ENCODE measurements at regions of chr5 and their contacts with region 1.

Region 1: GRCh38 chr5:6435356-6435755 is 13.3 kb upstream of the UBE2QL1 start:
- DNase-seq: peak; percentile 56
- H3K4me3 ChIP-seq: no peak overlapping the region
- H3K27ac ChIP-seq: no peak overlapping the region
- H3K4me1 ChIP-seq: no peaks in the 10 kb centered on the region
- H3K27me3 ChIP-seq: peaks cover 11 to 12% of the 10 kb centered on the region in 2 experiments
- CTCF ChIP-seq: peak; percentile 64 to 82
- POLR2A ChIP-seq: no peak

Region 2: GRCh38 chr5:5492087-5492933 is 943.0 kb before region 1 on chr5:
- CTCF ChIA-PET with region 1: interaction called, 14 read pairs
- POLR2A ChIA-PET with region 1: no interaction called
- dilution Hi-C with region 1: no loop called
- intact Hi-C with region 1: loop called (anchors 5 kb)
- DNase-seq: peak; percentile 49
- H3K4me3 ChIP-seq: no peak overlapping the region
- H3K27ac ChIP-seq: no peak overlapping the region
- H3K4me1 ChIP-seq: peaks cover 3% of the 10 kb centered on the region
- H3K27me3 ChIP-seq: peaks cover 0 to 7% of the 10 kb centered on the region in 2 experiments
- CTCF ChIP-seq: peak; percentile 62
- POLR2A ChIP-seq: no peak

Region 3: DNA sequence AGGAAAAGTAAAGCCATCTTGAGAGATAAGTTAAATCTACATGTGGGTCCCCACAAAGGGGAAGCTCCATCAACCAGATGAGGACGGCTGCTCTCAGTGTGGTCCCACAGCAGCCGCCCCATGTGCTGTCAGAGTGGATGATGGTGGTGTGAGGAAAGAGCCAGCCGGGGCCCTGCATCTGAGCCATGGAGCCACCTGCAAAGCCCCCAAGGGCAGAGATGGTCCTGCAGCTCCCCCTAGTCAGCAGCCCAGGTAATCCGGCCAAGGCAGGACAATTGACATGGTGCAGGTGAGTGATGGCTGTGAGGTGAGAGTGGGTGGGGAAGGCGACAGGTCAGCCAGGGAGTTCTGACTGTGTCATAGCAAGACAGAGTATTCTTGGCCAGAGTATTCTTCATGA is 554.1 kb before region 1 on chr5:
- CTCF ChIA-PET with region 1: no interaction called
- POLR2A ChIA-PET with region 1: no interaction called
- dilution Hi-C with region 1: no loop called
- intact Hi-C with region 1: no loop called
- DNase-seq: no peak
- H3K4me3 ChIP-seq: no peak overlapping the region
- H3K27ac ChIP-seq: no peak overlapping the region
- H3K4me1 ChIP-seq: no peaks in the 10 kb centered on the region
- H3K27me3 ChIP-seq: no peaks in the 10 kb centered on the region
- CTCF ChIP-seq: no peak
- POLR2A ChIP-seq: no peak

Region 4: GRCh38 chr5:6305853-6306252 is 129.5 kb before region 1 on chr5:
- CTCF ChIA-PET with region 1: interaction called, 10 read pairs
- POLR2A ChIA-PET with region 1: no interaction called
- dilution Hi-C with region 1: no loop called
- intact Hi-C with region 1: no loop called
- DNase-seq: no peak
- H3K4me3 ChIP-seq: no peak overlapping the region
- H3K27ac ChIP-seq: no peak overlapping the region
- H3K4me1 ChIP-seq: no peaks in the 10 kb centered on the region
- H3K27me3 ChIP-seq: no peaks in the 10 kb centered on the region
- CTCF ChIP-seq: no peak
- POLR2A ChIP-seq: no peak

Region 5: DNA sequence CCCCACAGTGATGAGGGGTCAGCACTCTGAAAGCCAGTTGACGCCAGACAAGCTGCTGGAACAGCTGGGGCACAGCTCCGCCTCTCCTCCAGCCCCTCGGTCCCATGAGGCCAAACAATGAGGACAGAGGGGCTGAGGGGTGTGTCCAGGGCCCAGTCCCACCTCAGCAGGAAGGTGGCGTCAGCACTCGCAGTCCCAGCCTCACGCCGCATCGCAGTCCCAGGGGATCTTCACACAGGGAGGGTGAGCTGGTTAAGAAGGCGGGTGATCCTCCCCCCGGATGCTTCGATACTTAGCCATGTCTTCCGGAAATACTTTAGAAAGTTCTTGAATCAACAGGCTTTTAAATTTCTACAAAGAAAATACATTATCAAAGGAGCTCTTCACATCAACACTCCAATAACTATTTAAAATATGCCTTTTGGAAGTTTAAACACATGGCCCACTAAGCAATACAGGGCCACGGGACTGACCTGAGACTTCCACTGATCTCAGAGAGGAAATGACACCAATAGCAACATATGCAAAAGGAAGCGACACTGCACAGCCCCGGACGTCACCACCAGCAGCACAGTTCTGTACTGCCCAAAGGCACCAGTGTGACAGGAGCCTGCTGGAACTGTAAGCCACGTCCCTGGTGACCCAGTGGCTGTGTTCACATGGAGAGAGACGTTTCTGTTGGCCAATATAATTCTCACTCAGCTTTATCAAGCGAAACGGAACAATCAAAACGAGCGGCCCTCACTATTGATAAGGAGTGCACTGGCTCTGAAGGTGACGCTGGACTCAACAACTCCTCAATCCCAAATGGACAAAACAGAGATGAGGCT is 62.9 kb before region 1 on chr5:
- CTCF ChIA-PET with region 1: interaction called, 24 read pairs
- POLR2A ChIA-PET with region 1: no interaction called
- dilution Hi-C with region 1: no loop called
- intact Hi-C with region 1: no loop called
- DNase-seq: peak; percentile 82
- H3K4me3 ChIP-seq: no peak overlapping the region
- H3K27ac ChIP-seq: peak overlapping the region; percentile 97
- H3K4me1 ChIP-seq: peaks cover 37% of the 10 kb centered on the region
- H3K27me3 ChIP-seq: no peaks in the 10 kb centered on the region
- CTCF ChIP-seq: no peak
- POLR2A ChIP-seq: no peak

Region 6: DNA sequence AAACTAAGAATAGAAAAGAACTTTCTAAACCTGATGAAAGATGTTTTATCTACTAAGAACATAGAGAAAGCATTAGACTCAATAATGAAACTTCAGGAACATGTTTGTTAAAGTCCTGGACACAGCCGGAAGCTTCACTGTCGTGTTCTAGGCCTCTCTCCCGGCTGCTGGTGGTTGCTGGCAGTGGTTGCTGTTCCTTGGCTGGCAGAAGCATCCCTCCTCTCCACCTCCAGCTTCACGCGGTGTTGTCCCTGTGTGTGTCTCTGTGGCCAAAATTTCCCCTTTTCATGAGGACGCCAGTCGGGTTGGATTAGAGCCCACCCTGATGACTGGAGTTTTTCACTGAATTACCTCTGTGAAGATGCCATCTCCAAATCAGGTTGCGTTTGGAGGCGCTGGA is 50.5 kb before region 1 on chr5:
- CTCF ChIA-PET with region 1: interaction called, 11 read pairs
- POLR2A ChIA-PET with region 1: no interaction called
- dilution Hi-C with region 1: no loop called
- intact Hi-C with region 1: no loop called
- DNase-seq: no peak
- H3K4me3 ChIP-seq: no peak overlapping the region
- H3K27ac ChIP-seq: no peak overlapping the region
- H3K4me1 ChIP-seq: no peaks in the 10 kb centered on the region
- H3K27me3 ChIP-seq: peaks cover 6% of the 10 kb centered on the region in 2 experiments
- CTCF ChIP-seq: no peak
- POLR2A ChIP-seq: no peak

Region 7: DNA sequence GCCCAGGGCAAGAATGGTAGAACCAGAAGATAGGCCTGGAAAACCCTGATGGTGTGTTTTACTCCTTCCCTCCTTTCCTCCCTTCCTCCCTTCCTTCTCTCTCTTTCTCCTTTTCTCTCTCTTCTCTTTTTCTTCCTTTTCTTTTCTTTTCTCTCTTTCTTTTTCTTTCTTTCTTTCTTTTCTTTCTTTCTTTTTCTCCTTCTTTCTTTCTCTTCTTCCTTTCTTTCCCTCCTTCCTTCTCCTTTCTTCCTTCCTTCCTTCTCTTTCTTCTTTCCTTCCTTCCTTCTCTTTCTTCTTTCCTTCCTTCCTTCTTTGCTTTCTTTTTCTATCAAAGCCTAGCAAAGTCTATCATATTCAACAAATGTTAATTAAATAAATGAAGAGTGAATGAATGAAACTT is 10.7 kb before region 1 on chr5:
- CTCF ChIA-PET with region 1: interaction called, 48 read pairs
- POLR2A ChIA-PET with region 1: no interaction called
- dilution Hi-C with region 1: no loop called
- intact Hi-C with region 1: no loop called
- DNase-seq: no peak
- H3K4me3 ChIP-seq: no peak overlapping the region
- H3K27ac ChIP-seq: no peak overlapping the region
- H3K4me1 ChIP-seq: peaks cover 36% of the 10 kb centered on the region
- H3K27me3 ChIP-seq: no peaks in the 10 kb centered on the region
- CTCF ChIP-seq: no peak
- POLR2A ChIP-seq: no peak

Region 8: DNA sequence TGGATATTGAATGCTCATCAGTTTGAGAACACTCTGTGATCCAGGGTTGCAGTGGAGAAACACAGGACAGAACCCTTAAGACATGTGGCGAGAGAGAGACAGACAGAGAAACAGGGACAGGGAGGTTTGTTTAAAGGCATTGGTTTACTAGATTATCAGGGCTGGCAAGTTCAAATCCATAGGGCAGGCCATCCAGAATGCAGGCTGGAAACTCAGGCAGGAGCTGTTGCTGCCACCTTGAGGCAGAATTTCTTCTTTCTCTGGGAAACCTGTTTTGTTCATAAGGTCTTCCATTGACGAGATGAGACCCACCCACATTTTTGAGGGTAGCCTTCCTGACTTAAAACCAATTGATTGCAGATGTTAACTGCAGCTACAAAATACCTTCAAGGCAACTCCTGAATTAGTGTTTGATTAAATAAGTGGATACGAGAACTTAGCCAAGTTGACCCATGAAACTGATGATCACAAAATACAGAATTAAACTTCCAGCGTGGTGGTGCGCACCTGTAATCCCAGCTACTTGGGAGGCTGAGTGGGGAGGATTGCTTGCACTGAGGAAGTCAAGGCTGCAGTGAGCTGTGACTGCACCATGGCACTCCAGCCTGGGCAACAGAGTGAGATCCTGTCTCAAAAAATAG is 141.6 kb after region 1 on chr5:
- CTCF ChIA-PET with region 1: interaction called, 4 read pairs
- POLR2A ChIA-PET with region 1: no interaction called
- dilution Hi-C with region 1: no loop called
- intact Hi-C with region 1: loop called (anchors 2 kb)
- DNase-seq: peak; percentile 72
- H3K4me3 ChIP-seq: no peak overlapping the region
- H3K27ac ChIP-seq: no peak overlapping the region
- H3K4me1 ChIP-seq: peaks cover 8% of the 10 kb centered on the region
- H3K27me3 ChIP-seq: peaks cover 18% of the 10 kb centered on the region in 2 experiments
- CTCF ChIP-seq: peak; percentile 66 to 71
- POLR2A ChIP-seq: no peak

Measured in endothelial cell of umbilical vein (primary cell).